ENCODE measurements at regions of chr17 and their contacts with region 1.

Region 1: GRCh38 chr17:56977673-56978395 is at the start of gene SCPEP1:
- DNase-seq: peak; percentile 67 to 89 (median 80)
- ATAC-seq: peak; percentile 98
- H3K4me3 ChIP-seq: peak within 1 kb of the TSS; percentile 73 to 79
- H3K4me3 Mint-ChIP-seq: peak within 1 kb of the TSS; percentile 93
- H3K27ac ChIP-seq: peak within 1 kb of the TSS; percentile 33 to 56
- H3K27ac Mint-ChIP-seq: peak within 1 kb of the TSS; percentile 90
- H3K4me1 ChIP-seq: peaks cover 12% of the 10 kb centered on the region
- H3K4me1 Mint-ChIP-seq: peaks cover 19% of the 10 kb centered on the region
- H3K27me3 ChIP-seq: no peaks in the 10 kb centered on the region
- H3K27me3 Mint-ChIP-seq: peaks cover 2% of the 10 kb centered on the region
- CTCF ChIP-seq: no peak
- total RNA-seq, gene SCPEP1: 22.9 to 28.4 TPM

Region 2: DNA sequence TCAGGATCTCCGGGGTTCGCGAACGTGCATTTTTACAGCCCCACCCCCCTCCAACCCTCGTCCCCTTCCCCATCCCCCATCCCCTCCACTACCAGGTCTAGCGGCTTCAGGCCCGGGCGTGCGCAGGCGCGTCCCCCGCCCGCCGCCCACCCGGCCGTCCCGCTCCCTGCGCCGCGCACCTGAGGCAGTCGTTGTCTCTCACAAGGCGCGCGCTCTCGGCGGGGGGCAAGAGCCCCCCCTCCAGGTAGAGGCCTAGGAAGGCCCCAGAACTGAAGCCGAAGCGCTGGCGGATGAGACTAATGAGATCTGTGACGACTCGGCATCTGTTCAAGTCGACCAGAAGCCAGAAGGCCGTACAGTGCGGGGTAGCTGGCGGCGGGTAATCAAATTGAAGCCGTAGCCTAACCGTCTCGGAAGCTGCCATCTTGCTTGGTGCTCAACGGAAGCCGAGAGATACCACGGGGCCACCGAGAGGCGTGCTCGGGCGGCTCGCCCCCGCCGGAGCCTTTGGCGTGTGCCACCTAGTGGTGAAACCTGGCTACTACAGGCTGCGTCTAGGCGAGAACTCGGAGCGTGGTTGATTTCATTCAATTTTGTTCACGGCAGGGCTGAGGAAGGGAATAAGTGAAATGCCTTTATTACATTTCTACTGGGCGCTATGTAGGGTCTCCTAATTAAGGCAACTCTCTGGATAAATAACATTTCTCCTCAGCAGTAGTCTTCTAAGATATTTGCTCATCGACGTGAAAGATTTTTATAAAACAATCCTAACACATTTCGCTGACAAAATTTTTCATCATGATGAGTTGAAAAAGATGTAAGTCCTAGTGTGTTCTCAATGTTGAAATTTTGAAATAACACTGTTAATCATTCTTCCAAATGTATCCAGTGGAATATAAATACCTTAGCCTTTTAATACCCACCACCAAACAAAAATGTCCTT is 17.0 kb before region 1 on chr17 and contains the start of gene COIL:
- CTCF ChIA-PET with region 1: interaction called, 7 read pairs
- POLR2A ChIA-PET with region 1: interaction called, 4 read pairs
- intact Hi-C with region 1: loop called (anchors 1 kb)
- DNase-seq: peak; percentile 85 to 96 (median 93)
- ATAC-seq: peak; percentile 98
- H3K4me3 ChIP-seq: peak within 1 kb of the TSS; percentile 65 to 89
- H3K4me3 Mint-ChIP-seq: peak within 1 kb of the TSS; percentile 89
- H3K27ac ChIP-seq: peak within 1 kb of the TSS; percentile 78 to 79
- H3K27ac Mint-ChIP-seq: peak within 1 kb of the TSS; percentile 96
- H3K4me1 ChIP-seq: peaks cover 22% of the 10 kb centered on the region
- H3K4me1 Mint-ChIP-seq: peaks cover 25% of the 10 kb centered on the region
- H3K27me3 ChIP-seq: no peaks in the 10 kb centered on the region
- H3K27me3 Mint-ChIP-seq: no peaks in the 10 kb centered on the region
- CTCF ChIP-seq: peak; percentile 99
- total RNA-seq, gene COIL: 24.1 to 24.3 TPM

Measured in CD8-positive, alpha-beta T cell (primary cell).